Activated CD4-positive, alpha-beta T cell treated with anti-CD3 and anti-CD28 coated beads for 36 hours (primary cell): ENCODE measurements at regions of chr19 and their contacts with region 1.

Region 1: GRCh38 chr19:49224856-49225255 is 67.3 kb downstream of the TRPM4 start:
- DNase-seq: peak; percentile 74
- ATAC-seq: peak; percentile 78
- H3K4me3 Mint-ChIP-seq: no peak overlapping the region
- H3K27ac Mint-ChIP-seq: no peak overlapping the region
- H3K4me1 Mint-ChIP-seq: peaks cover 4% of the 10 kb centered on the region
- H3K27me3 Mint-ChIP-seq: peaks cover 4% of the 10 kb centered on the region

Region 2: DNA sequence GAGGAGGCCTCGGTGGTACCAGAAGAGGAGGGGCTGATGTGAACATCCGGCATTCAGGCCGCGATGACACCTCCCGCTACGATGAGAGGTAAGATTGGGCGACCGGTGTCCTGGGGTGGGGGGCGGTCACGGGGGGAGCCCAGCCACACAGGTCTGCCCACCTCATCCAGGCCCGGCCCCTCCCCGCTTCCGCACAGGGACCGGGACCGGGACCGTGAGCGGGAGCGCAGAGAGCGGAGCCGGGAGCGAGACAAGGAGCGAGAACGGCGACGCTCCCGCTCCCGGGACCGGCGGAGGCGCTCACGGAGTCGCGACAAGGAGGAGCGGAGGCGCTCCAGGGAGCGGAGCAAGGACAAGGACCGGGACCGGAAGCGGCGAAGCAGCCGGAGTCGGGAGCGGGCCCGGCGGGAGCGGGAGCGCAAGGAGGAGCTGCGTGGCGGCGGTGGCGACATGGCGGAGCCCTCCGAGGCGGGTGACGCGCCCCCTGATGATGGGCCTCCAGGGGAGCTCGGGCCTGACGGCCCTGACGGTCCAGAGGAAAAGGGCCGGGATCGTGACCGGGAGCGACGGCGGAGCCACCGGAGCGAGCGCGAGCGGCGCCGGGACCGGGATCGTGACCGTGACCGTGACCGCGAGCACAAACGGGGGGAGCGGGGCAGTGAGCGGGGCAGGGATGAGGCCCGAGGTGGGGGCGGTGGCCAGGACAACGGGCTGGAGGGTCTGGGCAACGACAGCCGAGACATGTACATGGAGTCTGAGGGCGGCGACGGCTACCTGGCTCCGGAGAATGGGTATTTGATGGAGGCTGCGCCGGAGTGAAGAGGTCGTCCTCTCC is 117.0 kb before region 1 on chr19:
- CTCF ChIA-PET with region 1: no interaction called
- POLR2A ChIA-PET with region 1: no interaction called
- intact Hi-C with region 1: no loop called
- DNase-seq: no peak
- ATAC-seq: no peak
- H3K4me3 Mint-ChIP-seq: no peak overlapping the region
- H3K27ac Mint-ChIP-seq: no peak overlapping the region
- H3K4me1 Mint-ChIP-seq: peaks cover 4% of the 10 kb centered on the region
- H3K27me3 Mint-ChIP-seq: no peaks in the 10 kb centered on the region

Region 3: GRCh38 chr19:49152119-49152550 is 72.7 kb before region 1 on chr19:
- CTCF ChIA-PET with region 1: no interaction called
- POLR2A ChIA-PET with region 1: no interaction called
- intact Hi-C with region 1: no loop called
- DNase-seq: no peak
- ATAC-seq: no peak
- H3K4me3 Mint-ChIP-seq: no peak overlapping the region
- H3K27ac Mint-ChIP-seq: no peak overlapping the region
- H3K4me1 Mint-ChIP-seq: peaks cover 21% of the 10 kb centered on the region
- H3K27me3 Mint-ChIP-seq: peaks cover 66% of the 10 kb centered on the region

Region 4: GRCh38 chr19:49243129-49243528 is 18.3 kb after region 1 on chr19:
- CTCF ChIA-PET with region 1: interaction called, 10 read pairs
- POLR2A ChIA-PET with region 1: no interaction called
- intact Hi-C with region 1: no loop called
- DNase-seq: no peak
- ATAC-seq: no peak
- H3K4me3 Mint-ChIP-seq: no peak overlapping the region
- H3K27ac Mint-ChIP-seq: no peak overlapping the region
- H3K4me1 Mint-ChIP-seq: no peaks in the 10 kb centered on the region
- H3K27me3 Mint-ChIP-seq: peaks cover 4% of the 10 kb centered on the region

Region 5: GRCh38 chr19:49301165-49301865 is 76.5 kb after region 1 on chr19:
- CTCF ChIA-PET with region 1: interaction called, 7 read pairs
- POLR2A ChIA-PET with region 1: no interaction called
- intact Hi-C with region 1: loop called (anchors 1 kb)
- DNase-seq: peak; percentile 92
- ATAC-seq: peak; percentile 100
- H3K4me3 Mint-ChIP-seq: no peak overlapping the region
- H3K27ac Mint-ChIP-seq: no peak overlapping the region
- H3K4me1 Mint-ChIP-seq: peaks cover 3% of the 10 kb centered on the region
- H3K27me3 Mint-ChIP-seq: no peaks in the 10 kb centered on the region

Region 6: DNA sequence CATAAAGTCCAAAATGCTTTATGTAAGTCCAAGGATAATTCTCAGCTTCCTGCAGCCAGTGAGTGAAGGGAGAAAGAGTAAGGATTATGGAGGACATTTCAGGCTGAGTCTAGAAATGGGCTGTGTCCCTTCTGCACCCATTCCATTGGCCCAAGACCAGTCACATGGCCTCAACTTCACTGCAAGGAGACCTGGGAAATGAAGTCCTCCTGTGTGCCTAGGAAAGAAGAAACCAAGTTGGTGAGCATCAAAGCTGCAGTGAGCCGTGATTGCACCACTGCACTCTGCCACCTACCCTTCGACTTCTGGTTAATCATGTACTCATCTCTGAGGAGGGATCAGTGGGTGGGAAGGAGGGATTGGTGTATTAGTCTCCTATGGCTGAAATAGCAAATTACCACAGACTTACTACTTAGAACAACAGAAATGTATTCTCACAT is 106.8 kb after region 1 on chr19:
- CTCF ChIA-PET with region 1: interaction called, 3 read pairs
- POLR2A ChIA-PET with region 1: no interaction called
- intact Hi-C with region 1: loop called in 1 of 2 experiments (anchors 1 kb)
- DNase-seq: peak; percentile 80
- ATAC-seq: peak; percentile 80
- H3K4me3 Mint-ChIP-seq: peak overlapping the region; percentile 33
- H3K27ac Mint-ChIP-seq: peak overlapping the region; percentile 75
- H3K4me1 Mint-ChIP-seq: peaks cover 81% of the 10 kb centered on the region
- H3K27me3 Mint-ChIP-seq: no peaks in the 10 kb centered on the region

Region 7: DNA sequence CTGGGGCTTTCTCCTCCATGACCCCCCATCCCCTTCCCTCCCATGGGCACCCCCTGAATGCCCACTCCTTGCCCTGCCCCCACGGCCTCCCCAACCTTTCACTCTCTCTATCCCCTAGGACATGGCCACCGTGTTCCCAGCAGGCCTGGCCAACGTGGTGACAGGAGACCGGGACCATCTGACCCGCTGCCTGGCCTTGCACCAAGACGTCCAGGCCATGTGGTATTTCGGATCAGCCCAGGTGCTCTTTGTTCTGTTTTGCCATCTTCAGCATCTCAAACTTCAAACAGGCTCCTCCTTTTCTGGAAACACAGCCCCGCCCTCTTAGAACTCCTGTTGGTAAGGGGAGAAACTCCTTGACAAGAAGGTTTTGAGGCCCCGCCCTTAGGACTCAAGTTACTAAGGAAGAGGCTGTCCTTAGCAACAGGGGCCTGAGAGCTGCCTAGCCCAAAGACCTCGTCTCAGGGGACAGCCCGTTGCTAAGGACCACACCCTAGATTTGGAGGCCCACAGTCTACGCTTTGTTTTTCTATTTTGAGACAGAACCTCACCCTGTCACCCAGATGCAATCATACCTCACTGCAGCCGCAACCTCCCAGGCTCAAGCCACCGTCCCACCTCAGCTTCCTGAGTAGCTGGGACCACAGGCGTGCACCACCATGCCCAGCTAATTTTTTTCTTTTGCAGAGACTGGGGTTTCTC is 244.0 kb after region 1 on chr19:
- CTCF ChIA-PET with region 1: interaction called, 4 read pairs
- POLR2A ChIA-PET with region 1: no interaction called
- intact Hi-C with region 1: loop called in 1 of 2 experiments (anchors 1 kb)
- DNase-seq: peak; percentile 88
- ATAC-seq: peak; percentile 75
- H3K4me3 Mint-ChIP-seq: peak overlapping the region; percentile 64
- H3K27ac Mint-ChIP-seq: peak overlapping the region; percentile 98
- H3K4me1 Mint-ChIP-seq: peaks cover 49% of the 10 kb centered on the region
- H3K27me3 Mint-ChIP-seq: no peaks in the 10 kb centered on the region